ENCODE measurements at regions of chr6 and their contacts with region 1.

Region 1: GRCh38 chr6:145214570-145214969 is 520.8 kb downstream of the EPM2A start:
- DNase-seq: no peak
- H3K4me3 ChIP-seq: no peak overlapping the region
- H3K27ac ChIP-seq: no peak overlapping the region
- H3K4me1 ChIP-seq: peaks cover 10% of the 10 kb centered on the region
- H3K27me3 ChIP-seq: no peaks in the 10 kb centered on the region
- CTCF ChIP-seq: peak; percentile 68

Region 2: DNA sequence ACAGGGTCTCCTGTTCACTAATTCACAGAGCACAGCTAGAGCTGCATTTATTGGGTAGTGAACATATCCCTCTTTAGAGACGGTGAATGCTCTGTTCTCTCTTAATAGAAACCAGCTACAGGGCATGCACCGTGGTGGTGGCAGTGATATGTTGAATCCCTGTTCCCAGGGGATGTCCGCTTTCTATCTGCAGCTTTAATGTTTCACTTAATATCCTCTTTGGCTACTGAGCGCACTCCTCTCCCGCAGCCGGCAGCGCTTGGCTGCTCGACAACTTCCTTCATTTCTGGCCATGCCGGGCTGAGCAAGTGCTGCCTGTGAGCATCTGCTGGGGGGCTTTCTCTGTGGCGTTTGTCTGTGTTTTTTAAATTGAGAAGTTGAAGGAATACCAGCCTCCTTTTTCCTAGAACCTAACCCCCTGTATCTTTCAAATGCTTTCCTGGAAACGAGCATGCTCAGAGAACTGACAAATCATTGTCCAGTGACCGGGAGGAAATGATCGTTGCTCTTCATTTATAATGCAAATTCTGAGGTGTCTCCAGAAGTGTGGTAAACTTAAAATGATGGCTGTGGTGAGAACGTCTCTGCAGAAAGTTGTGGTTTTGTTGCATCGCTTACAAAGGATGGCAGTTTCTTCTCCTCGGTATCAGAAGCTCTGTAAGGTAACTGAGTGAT is 631.5 kb before region 1 on chr6:
- intact Hi-C with region 1: loop called (anchors 10 kb)
- DNase-seq: peak; percentile 39
- H3K4me3 ChIP-seq: peak overlapping the region; percentile 27
- H3K27ac ChIP-seq: no peak overlapping the region
- H3K4me1 ChIP-seq: peaks cover 45% of the 10 kb centered on the region
- H3K27me3 ChIP-seq: no peaks in the 10 kb centered on the region
- CTCF ChIP-seq: no peak

Region 3: GRCh38 chr6:145112711-145113151 is 101.8 kb before region 1 on chr6:
- intact Hi-C with region 1: no loop called
- DNase-seq: no peak
- H3K4me3 ChIP-seq: no peak overlapping the region
- H3K27ac ChIP-seq: no peak overlapping the region
- H3K4me1 ChIP-seq: no peaks in the 10 kb centered on the region
- H3K27me3 ChIP-seq: no peaks in the 10 kb centered on the region
- CTCF ChIP-seq: no peak

Region 4: DNA sequence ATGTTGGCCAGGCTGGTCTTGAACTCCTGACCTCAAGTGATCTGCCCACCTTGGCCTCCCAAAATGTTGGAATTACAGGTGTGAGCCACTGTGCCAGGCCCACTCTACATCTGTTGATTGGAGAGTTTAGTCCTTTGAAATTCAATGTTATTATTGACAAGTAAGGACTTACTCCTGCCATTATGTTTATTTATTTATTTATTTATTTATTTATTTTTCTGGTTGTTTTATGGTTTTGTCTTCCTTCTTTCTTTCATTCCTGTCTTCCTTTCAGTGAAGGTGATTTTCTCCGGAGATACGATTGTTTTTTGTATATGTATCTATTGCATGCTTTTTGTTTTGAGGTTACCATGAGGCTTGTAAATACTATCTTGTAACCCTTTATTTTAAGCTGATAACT is 81.9 kb before region 1 on chr6:
- intact Hi-C with region 1: no loop called
- DNase-seq: no peak
- H3K4me3 ChIP-seq: no peak overlapping the region
- H3K27ac ChIP-seq: no peak overlapping the region
- H3K4me1 ChIP-seq: no peaks in the 10 kb centered on the region
- H3K27me3 ChIP-seq: no peaks in the 10 kb centered on the region
- CTCF ChIP-seq: no peak

Region 5: DNA sequence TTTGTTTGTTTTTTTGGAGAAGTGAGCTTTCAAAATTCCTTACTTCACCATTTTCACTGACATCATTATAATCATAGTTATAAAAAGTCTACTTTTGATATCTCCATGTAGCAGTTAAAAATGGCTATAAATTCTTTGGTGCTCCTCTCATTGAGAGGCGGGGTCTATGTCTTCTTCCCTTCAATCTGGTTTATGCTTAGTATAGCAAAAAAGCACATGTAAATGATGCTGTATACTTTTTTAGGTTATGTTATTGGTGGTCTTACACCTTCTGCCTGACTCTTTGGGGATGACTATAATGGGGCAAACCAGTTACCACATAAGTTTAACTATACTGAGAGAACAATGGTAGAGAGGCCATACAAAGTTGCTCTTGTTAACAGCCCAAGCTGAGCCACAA is 231.1 kb after region 1 on chr6:
- intact Hi-C with region 1: no loop called
- DNase-seq: no peak
- H3K4me3 ChIP-seq: no peak overlapping the region
- H3K27ac ChIP-seq: no peak overlapping the region
- H3K4me1 ChIP-seq: no peaks in the 10 kb centered on the region
- H3K27me3 ChIP-seq: no peaks in the 10 kb centered on the region
- CTCF ChIP-seq: no peak

Measured in left ventricle myocardium inferior (tissue), 1 donor.